PC-3 (cell line): ENCODE measurements at regions of chr11 and their contacts with region 1.

Region 1: GRCh38 chr11:16945671-16946469 is 68.3 kb downstream of the PLEKHA7 start:
- DNase-seq: peak; percentile 78
- ATAC-seq: peak; percentile 99
- H3K4me3 ChIP-seq: no peak overlapping the region
- H3K27ac ChIP-seq: no peak overlapping the region
- H3K4me1 ChIP-seq: no peaks in the 10 kb centered on the region
- H3K27me3 ChIP-seq: no peaks in the 10 kb centered on the region
- CTCF ChIP-seq: peak; percentile 88

Region 2: GRCh38 chr11:16902781-16903378 is 43.0 kb before region 1 on chr11:
- CTCF ChIA-PET with region 1: no interaction called
- POLR2A ChIA-PET with region 1: no interaction called
- intact Hi-C with region 1: no loop called
- DNase-seq: no peak
- ATAC-seq: peak; percentile 36
- H3K4me3 ChIP-seq: no peak overlapping the region
- H3K27ac ChIP-seq: peak overlapping the region; percentile 78
- H3K4me1 ChIP-seq: peaks cover 30% of the 10 kb centered on the region
- H3K27me3 ChIP-seq: no peaks in the 10 kb centered on the region
- CTCF ChIP-seq: no peak

Region 3: GRCh38 chr11:17014838-17015626 is 69.2 kb after region 1 on chr11:
- CTCF ChIA-PET with region 1: interaction called, 4 read pairs
- POLR2A ChIA-PET with region 1: no interaction called
- intact Hi-C with region 1: loop called (anchors 2 kb)
- DNase-seq: peak; percentile 83
- ATAC-seq: peak; percentile 39
- H3K4me3 ChIP-seq: peak overlapping the region; percentile 73
- H3K27ac ChIP-seq: peak overlapping the region; percentile 42
- H3K4me1 ChIP-seq: peaks cover 30% of the 10 kb centered on the region
- H3K27me3 ChIP-seq: no peaks in the 10 kb centered on the region
- CTCF ChIP-seq: peak; percentile 76